Mammary epithelial cell (primary cell): ENCODE measurements at regions of chr11 and their contacts with region 1.

Region 1: GRCh38 chr11:122796128-122796717 is 42.1 kb upstream of the CRTAM start:
- DNase-seq: no peak
- H3K4me3 ChIP-seq: no peak overlapping the region
- H3K27ac ChIP-seq: no peak overlapping the region
- H3K4me1 ChIP-seq: peaks cover 5% of the 10 kb centered on the region
- H3K27me3 ChIP-seq: no peaks in the 10 kb centered on the region
- CTCF ChIP-seq: peak; percentile 94 to 99

Region 2: DNA sequence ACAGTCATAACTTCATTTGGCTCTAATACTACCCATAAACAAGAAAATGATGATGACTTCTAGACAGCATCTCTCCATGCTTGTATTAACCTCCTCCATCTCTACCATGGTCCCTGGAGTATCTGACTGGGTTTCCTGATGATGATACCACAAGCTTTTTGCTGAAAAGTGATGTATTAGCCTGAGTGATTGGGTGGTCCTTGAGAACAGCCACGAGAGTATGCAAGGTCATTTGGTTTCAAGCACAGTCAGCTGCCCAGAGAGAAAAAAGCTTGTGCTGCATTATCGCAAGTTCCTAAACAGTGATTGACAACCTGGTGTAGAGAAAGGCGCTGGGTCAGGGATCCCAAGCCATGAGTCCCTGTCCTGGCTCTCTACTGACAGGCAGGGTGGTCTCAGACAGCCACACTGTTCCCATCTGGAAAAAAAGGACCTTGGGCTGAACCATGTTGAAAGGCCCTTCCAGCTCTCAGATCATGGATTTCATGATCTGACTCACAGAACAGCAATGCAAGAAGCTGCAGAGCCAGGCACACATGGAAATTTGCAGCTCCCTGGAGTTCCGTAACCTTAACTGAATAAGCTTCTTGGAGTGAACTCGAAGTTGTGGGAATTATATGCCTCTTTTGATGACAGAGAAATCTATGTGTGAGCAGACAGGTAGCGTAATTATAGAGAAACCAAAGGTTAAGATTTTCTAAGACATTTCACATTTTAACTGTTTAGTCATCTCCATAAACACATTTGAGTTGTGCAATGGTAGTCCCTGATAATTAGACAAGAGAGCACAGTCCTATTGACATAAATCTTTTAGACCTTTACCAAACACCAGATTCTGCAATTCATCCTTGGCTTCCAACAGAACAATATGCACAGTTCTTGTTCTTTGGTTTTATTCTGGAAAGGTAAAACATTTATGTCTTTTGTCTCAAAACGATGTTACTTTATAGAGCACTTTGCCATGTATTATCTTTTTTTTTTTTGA is 194.8 kb before region 1 on chr11:
- CTCF ChIA-PET with region 1: interaction called, 11 read pairs
- dilution Hi-C with region 1: no loop called
- in situ Hi-C with region 1: no loop called
- intact Hi-C with region 1: no loop called
- DNase-seq: peak; percentile 41
- H3K4me3 ChIP-seq: no peak overlapping the region
- H3K27ac ChIP-seq: no peak overlapping the region
- H3K4me1 ChIP-seq: no peaks in the 10 kb centered on the region
- H3K27me3 ChIP-seq: peaks cover 3% of the 10 kb centered on the region
- CTCF ChIP-seq: no peak

Region 3: GRCh38 chr11:122616718-122617117 is 179.5 kb before region 1 on chr11:
- CTCF ChIA-PET with region 1: no interaction called
- dilution Hi-C with region 1: no loop called
- in situ Hi-C with region 1: no loop called
- intact Hi-C with region 1: no loop called
- DNase-seq: no peak
- H3K4me3 ChIP-seq: no peak overlapping the region
- H3K27ac ChIP-seq: no peak overlapping the region
- H3K4me1 ChIP-seq: no peaks in the 10 kb centered on the region
- H3K27me3 ChIP-seq: no peaks in the 10 kb centered on the region
- CTCF ChIP-seq: no peak

Region 4: DNA sequence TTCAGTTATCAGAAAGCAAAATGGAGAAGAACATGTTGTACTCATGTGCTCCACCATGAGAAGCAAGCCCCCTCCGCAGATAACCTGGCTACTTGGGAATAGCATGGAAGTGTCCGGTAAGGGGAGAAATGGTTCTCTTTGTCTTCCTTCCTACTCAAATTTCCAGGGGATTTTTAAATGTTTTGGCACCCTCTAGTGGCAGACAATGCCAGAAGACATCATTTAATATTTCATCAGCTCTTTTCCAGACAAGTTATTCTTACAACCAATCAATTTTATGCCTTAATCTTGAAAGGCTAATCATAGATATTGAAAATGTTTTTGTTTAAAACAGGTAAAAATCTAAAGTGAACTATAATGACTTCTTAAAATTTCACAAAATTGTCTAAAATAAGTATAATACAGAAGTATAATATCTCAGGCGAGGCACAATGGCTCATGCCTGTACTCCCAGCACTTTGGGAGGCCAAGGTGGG is 57.8 kb after region 1 on chr11:
- CTCF ChIA-PET with region 1: no interaction called
- dilution Hi-C with region 1: loop called (anchors 5 kb)
- in situ Hi-C with region 1: loop called (anchors 5 kb)
- intact Hi-C with region 1: loop called (anchors 1 kb)
- DNase-seq: peak; percentile 72
- H3K4me3 ChIP-seq: no peak overlapping the region
- H3K27ac ChIP-seq: no peak overlapping the region
- H3K4me1 ChIP-seq: peaks cover 35% of the 10 kb centered on the region
- H3K27me3 ChIP-seq: no peaks in the 10 kb centered on the region
- CTCF ChIP-seq: peak; percentile 63 to 67

Region 5: DNA sequence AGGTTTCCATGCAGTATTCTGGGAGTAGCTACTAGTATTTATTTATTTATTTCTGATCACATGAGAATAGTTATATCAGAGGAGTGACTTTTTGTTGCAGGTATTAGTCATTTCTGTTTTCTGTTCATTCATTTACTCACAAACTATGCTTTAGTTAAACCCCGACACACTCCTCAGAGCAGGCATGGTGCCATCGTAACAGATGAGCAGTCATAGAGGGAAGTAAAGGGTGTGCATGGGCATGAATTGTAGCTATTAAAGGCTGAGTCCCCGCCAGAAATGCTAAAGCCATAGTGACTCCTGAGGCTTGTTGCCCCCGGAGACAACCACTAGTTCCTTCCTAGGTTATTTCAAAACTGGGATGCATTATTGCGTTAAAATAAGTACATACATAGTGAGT is 96.9 kb after region 1 on chr11:
- CTCF ChIA-PET with region 1: no interaction called
- dilution Hi-C with region 1: no loop called
- in situ Hi-C with region 1: no loop called
- intact Hi-C with region 1: no loop called
- DNase-seq: no peak
- H3K4me3 ChIP-seq: no peak overlapping the region
- H3K27ac ChIP-seq: no peak overlapping the region
- H3K4me1 ChIP-seq: no peaks in the 10 kb centered on the region
- H3K27me3 ChIP-seq: no peaks in the 10 kb centered on the region
- CTCF ChIP-seq: no peak